ENCODE measurements at regions of chr12 and their contacts with region 1.

Region 1: GRCh38 chr12:124453419-124454351 is 113.7 kb downstream of the NCOR2 start:
- DNase-seq: peak; percentile 95 to 96
- ATAC-seq: peak; percentile 85
- H3K4me3 ChIP-seq: no peak overlapping the region
- H3K27ac ChIP-seq: peak overlapping the region; percentile 50 to 51
- H3K4me1 ChIP-seq: no peaks in the 10 kb centered on the region
- H3K27me3 ChIP-seq: no peaks in the 10 kb centered on the region

Region 2: DNA sequence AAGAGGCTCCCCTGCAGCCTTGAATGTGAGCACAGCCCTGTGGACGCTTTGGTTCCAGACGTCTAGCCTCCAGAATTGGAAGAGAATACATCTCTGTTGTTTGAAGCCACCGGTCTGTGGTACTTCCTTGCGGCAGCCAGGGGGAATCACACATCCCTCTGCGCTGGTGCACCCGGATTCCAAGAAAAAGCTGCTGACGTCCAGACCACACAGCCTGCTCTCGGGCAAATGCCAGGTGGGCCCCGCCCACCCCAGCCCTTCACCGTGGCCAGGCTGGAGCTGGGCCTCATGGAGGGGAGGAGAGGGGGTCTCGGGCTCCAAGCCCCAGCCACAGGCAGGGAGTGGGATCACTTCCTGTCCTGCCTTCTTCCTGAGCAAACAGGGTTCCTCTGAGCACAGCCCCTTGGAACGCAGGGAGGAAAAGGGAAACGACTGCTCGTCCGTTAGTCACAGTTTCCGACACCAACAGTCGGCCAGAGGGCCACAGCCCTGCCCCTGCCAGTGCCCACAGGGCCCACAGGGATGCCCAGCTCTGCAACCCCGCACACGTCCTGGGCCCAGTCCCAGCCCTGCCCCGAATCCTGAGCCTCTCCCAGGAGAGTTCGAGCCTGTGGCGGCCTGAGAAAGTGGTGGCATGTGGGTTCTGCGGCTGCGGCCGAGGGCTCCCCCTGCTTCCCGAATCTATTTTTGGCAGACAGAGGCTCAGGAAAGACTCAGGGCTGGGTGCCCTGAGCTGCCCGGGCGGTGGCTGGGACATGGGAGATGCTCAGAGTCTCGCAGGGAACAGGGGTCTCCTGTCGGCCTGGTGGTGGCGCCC is 73.5 kb before region 1 on chr12:
- intact Hi-C with region 1: loop called in 1 of 2 experiments (anchors 5 kb)
- DNase-seq: peak; percentile 93 to 96
- ATAC-seq: peak; percentile 86
- H3K4me3 ChIP-seq: no peak overlapping the region
- H3K27ac ChIP-seq: peak overlapping the region; percentile 10 to 85
- H3K4me1 ChIP-seq: no peaks in the 10 kb centered on the region
- H3K27me3 ChIP-seq: no peaks in the 10 kb centered on the region

Region 3: DNA sequence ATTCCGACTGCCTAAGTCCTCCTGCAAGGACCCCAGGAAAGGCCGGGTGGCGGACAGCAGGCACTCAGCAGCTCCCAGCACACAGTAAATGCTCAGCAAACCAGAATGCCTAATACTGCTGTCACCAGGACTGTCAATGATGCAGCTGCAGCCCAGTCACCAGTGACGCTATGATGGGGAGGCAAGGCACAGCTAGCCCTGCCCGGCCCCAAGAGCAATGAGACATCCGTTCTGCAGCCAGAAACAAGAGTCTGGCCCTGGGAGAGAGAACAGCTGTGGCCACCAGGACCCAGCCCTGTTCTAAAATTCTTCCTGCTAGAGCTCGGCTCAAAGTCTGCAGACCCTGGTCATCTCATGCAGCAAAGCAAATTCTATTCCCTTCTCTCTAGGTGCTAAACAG is 44.0 kb after region 1 on chr12:
- intact Hi-C with region 1: loop called in 1 of 2 experiments (anchors 5 kb)
- DNase-seq: peak; percentile 85 to 88
- ATAC-seq: peak; percentile 53
- H3K4me3 ChIP-seq: no peak overlapping the region
- H3K27ac ChIP-seq: no peak overlapping the region
- H3K4me1 ChIP-seq: no peaks in the 10 kb centered on the region
- H3K27me3 ChIP-seq: no peaks in the 10 kb centered on the region

Region 4: GRCh38 chr12:124567661-124568373 is 114.1 kb after region 1 on chr12:
- intact Hi-C with region 1: loop called in 1 of 2 experiments (anchors 5 kb)
- DNase-seq: peak; percentile 98
- ATAC-seq: peak; percentile 92
- H3K4me3 ChIP-seq: no peak overlapping the region
- H3K27ac ChIP-seq: peak overlapping the region in 1 of 2 donors; percentile 75
- H3K4me1 ChIP-seq: no peaks in the 10 kb centered on the region
- H3K27me3 ChIP-seq: no peaks in the 10 kb centered on the region

Region 5: DNA sequence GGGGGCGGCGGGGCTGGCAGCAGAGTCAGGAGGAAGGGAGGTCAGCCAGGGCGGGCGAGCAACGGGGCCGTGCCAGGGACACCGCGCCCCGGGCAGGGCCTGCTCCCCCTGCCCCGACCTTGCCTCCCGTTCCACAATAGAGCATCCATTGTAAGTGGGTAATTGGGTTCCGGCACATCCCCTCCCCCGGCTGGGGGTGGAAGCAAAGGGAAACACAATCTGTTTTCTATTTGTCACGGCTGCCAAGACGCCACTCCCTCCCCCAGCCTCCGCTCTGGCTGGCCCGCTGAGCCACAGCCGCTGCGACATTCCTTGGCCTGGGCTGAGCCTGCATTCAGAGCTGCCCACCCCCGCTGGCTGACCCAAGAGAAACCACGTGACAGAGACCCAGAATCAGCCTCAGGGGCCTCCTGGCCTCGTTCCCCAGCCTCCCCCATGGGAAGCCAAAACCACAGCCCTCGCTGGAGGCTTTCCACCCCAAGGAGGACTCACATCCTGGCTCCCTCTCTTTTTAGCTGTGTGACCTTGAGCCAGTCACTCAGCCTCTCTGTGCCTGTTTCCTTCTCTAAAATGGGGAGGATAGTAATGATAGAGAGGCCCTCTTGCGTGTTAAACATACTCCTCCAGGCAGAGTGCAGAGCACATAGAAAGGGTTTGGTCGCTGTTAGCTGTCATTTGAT is 292.3 kb after region 1 on chr12:
- intact Hi-C with region 1: no loop called
- DNase-seq: peak; percentile 96 to 97
- ATAC-seq: peak; percentile 95
- H3K4me3 ChIP-seq: no peak overlapping the region
- H3K27ac ChIP-seq: peak overlapping the region; percentile 24 to 72
- H3K4me1 ChIP-seq: no peaks in the 10 kb centered on the region
- H3K27me3 ChIP-seq: no peaks in the 10 kb centered on the region